Heart left ventricle (tissue), 16 donors: ENCODE measurements at regions of chr3 and their contacts with region 1.

Region 1: DNA sequence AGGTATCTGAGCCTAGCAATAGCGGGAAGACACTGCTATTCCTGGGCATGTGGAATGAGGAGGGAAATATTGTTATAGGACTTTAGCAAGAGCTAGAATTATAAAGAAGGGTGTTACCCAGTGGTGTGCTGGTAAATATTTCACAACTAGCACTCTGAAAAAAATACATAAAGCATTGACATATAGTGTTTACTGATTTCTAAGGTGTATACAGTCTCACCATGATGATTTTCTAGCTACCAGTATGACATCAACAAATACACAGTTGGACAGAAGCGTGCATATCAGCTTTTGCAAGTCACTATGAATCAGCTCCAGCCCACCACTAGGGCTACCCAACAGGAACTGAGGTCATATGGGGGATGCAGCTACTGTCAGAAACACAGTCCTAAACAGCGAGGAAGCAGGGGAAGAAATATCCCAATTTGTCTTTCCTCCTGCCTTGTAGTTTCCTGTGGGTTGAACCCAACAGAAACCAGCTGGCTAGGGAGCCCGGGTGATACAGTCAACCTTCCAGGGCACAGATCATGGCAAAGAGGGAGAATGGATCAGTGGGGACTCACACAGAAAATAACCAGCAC is 39.6 kb downstream of the HGD start:
- DNase-seq: no peak
- ATAC-seq: peak in 1 of 4 donors; percentile 30
- H3K4me3 ChIP-seq: no peak overlapping the region
- H3K27ac ChIP-seq: no peak overlapping the region
- H3K4me1 ChIP-seq: peaks cover 0 to 27% (median 5%) of the 10 kb centered on the region in 12 donors
- H3K27me3 ChIP-seq: no peaks in the 10 kb centered on the region
- CTCF ChIP-seq: no peak
- POLR2A ChIP-seq: no peak

Region 2: DNA sequence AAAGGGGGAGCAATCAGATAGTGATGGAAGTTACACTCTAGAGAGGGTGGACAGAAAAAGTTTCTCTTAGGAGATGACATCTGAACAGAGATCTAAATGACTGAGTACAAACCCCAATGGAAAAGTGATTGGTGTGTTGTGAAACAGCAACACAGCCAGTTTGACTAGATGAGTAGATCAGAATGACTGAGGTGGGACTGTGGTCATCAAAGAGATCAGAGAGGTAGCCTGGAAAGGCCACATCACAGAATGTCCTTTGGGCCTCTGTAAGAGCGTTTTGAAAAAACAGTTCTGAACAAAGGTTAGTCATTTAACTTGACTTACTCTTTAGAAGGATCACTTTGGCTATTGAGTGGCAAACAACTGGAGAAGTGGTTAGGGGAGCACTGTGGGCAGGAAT is 303.9 kb before region 1 on chr3:
- intact Hi-C with region 1: no loop called
- DNase-seq: no peak
- ATAC-seq: no peak
- H3K4me3 ChIP-seq: no peak overlapping the region
- H3K27ac ChIP-seq: no peak overlapping the region
- H3K4me1 ChIP-seq: peaks cover 0 to 6% (median 0%) of the 10 kb centered on the region in 12 donors
- H3K27me3 ChIP-seq: no peaks in the 10 kb centered on the region
- CTCF ChIP-seq: no peak
- POLR2A ChIP-seq: no peak

Region 3: DNA sequence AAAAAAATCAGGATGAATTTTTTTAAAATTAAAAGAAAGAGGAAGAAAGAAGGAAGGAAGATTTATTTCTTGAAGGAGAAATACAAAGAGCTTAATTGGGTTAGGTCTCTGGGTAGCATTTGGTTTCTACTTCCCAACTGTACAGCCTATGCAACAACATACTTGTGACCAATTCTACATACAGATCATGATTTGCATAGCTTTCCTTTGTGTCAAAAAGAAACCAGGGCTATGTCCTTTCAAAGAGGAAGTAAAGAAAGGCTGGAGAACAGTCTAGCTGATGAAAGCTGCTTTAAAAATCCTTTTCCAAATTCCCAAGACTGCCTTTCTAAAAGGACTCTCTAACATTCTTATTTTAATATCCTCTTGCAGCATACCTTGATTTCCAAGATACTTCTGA is 45.7 kb after region 1 on chr3:
- intact Hi-C with region 1: loop called in 1 of 10 experiments (anchors 5 kb)
- DNase-seq: no peak
- ATAC-seq: peak in 3 of 4 donors; percentile 24 to 48 (median 46)
- H3K4me3 ChIP-seq: no peak overlapping the region
- H3K27ac ChIP-seq: peak overlapping the region in 1 of 12 donors; percentile 5
- H3K4me1 ChIP-seq: peaks cover 0 to 7% (median 0%) of the 10 kb centered on the region in 12 donors
- H3K27me3 ChIP-seq: no peaks in the 10 kb centered on the region
- CTCF ChIP-seq: no peak
- POLR2A ChIP-seq: no peak

Region 4: GRCh38 chr3:120773932-120774331 is 131.5 kb after region 1 on chr3:
- intact Hi-C with region 1: no loop called
- DNase-seq: no peak
- ATAC-seq: no peak
- H3K4me3 ChIP-seq: no peak overlapping the region
- H3K27ac ChIP-seq: no peak overlapping the region
- H3K4me1 ChIP-seq: no peaks in the 10 kb centered on the region
- H3K27me3 ChIP-seq: no peaks in the 10 kb centered on the region
- CTCF ChIP-seq: no peak
- POLR2A ChIP-seq: no peak

Region 5: GRCh38 chr3:121508389-121508788 is 865.9 kb after region 1 on chr3:
- intact Hi-C with region 1: no loop called
- DNase-seq: no peak
- ATAC-seq: no peak
- H3K4me3 ChIP-seq: no peak overlapping the region
- H3K27ac ChIP-seq: no peak overlapping the region
- H3K4me1 ChIP-seq: no peaks in the 10 kb centered on the region
- H3K27me3 ChIP-seq: no peaks in the 10 kb centered on the region
- CTCF ChIP-seq: no peak
- POLR2A ChIP-seq: no peak